Dorsolateral prefrontal cortex (tissue), 120 donors: ENCODE measurements at regions of chr10 and their contacts with region 1.

Region 1: GRCh38 chr10:30783939-30784500 is 154.5 kb upstream of the LYZL2 start:
- DNase-seq: peak; percentile 76 to 94 (median 86)
- H3K4me3 ChIP-seq: peak overlapping the region; percentile 48 to 89 (median 79)
- H3K27ac ChIP-seq: peak overlapping the region; percentile 80 to 99 (median 98)
- H3K27me3 ChIP-seq: no peaks in the 10 kb centered on the region
- CTCF ChIP-seq: peak; percentile 47 to 93 (median 82)

Region 2: GRCh38 chr10:30724296-30724695 is 59.7 kb before region 1 on chr10:
- intact Hi-C with region 1: no loop called
- DNase-seq: no peak
- H3K4me3 ChIP-seq: no peak overlapping the region
- H3K27ac ChIP-seq: no peak overlapping the region
- H3K27me3 ChIP-seq: no peaks in the 10 kb centered on the region
- CTCF ChIP-seq: no peak

Region 3: GRCh38 chr10:31031558-31032257 is 247.7 kb after region 1 on chr10 and contains the start of gene ZNF438:
- intact Hi-C with region 1: loop called (anchors 2 kb)
- DNase-seq: peak; percentile 87 to 97 (median 93)
- H3K4me3 ChIP-seq: peak within 1 kb of the TSS; percentile 53 to 98 (median 82)
- H3K27ac ChIP-seq: peak within 1 kb of the TSS; percentile 84 to 100 (median 98)
- H3K27me3 ChIP-seq: no peaks in the 10 kb centered on the region
- CTCF ChIP-seq: peak; percentile 14 to 79 (median 66)
- total RNA-seq, gene ZNF438: 6.7 to 14.1 (median 10.0) TPM

Region 4: GRCh38 chr10:31318854-31319601 is 535.0 kb after region 1 on chr10 and contains the start of gene ZEB1:
- intact Hi-C with region 1: loop called in 1 of 2 experiments (anchors 5 kb)
- DNase-seq: peak; percentile 24 to 85 (median 60)
- H3K4me3 ChIP-seq: peak within 1 kb of the TSS; percentile 53 to 94 (median 81)
- H3K27ac ChIP-seq: peak within 1 kb of the TSS in 58 of 59 donors; percentile 48 to 96 (median 90)
- H3K27me3 ChIP-seq: peaks cover 0 to 39% (median 5%) of the 10 kb centered on the region in 45 donors
- CTCF ChIP-seq: peak in 34 of 56 donors; percentile 11 to 47 (median 30)
- total RNA-seq, gene ZEB1: 53.6 to 139 (median 89.0) TPM

Region 5: DNA sequence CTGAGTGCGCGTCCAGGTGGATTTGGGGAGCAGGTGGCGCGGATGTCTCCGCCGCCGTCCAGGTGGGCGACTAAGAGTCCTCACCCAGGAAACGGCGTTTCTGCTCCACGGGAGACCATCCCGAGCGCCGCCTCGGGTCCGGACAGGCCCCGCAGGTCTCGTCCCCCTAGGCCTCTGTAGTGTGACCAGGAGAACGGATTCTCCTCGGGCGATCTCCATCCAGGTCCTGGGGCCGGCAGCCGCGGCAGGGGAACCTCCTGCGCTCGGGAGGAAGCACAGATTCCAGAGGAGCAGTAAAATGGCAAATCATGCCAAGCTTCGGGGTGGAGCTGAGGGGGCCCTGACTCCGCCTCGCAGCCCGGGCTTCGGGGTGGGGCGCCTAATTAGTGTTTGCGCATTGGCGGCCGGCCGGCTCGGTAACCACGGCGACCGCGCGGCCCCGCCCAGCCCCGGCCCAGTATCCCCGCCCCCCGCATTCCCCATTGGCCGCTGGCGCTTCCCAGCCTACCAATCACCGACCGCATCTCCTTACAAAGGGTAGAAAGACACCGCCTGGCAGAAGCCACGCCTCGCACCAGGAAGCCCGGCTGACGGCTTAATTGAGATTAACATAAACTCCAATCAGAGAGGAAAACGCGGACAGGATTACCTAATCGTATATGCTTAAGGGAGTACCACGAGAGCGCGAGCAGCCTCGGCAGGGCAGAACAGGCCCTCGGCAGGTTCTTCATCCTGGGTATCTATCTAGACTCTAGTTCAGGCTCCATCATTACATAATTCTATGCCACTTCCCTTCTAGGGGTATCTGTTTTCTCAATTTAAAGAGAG is 976.0 kb after region 1 on chr10:
- intact Hi-C with region 1: loop called in 1 of 2 experiments (anchors 2 kb)
- DNase-seq: peak; percentile 92 to 99 (median 97)
- H3K4me3 ChIP-seq: peak overlapping the region; percentile 71 to 99 (median 90)
- H3K27ac ChIP-seq: peak overlapping the region; percentile 72 to 98 (median 94)
- H3K27me3 ChIP-seq: no peaks in the 10 kb centered on the region
- CTCF ChIP-seq: peak in 6 of 56 donors; percentile 9 to 33 (median 18)